Esophagus muscularis mucosa (tissue), 4 donors: ENCODE measurements at regions of chr21 and their contacts with region 1.

Region 1: GRCh38 chr21:36966066-36966820 is at the start of gene HLCS:
- DNase-seq: no peak
- H3K4me3 ChIP-seq: peak within 1 kb of the TSS; percentile 73 to 85 (median 79)
- H3K27ac ChIP-seq: peak within 1 kb of the TSS; percentile 79 to 91 (median 90)
- H3K4me1 ChIP-seq: peaks cover 0 to 20% (median 15%) of the 10 kb centered on the region in 4 donors
- H3K27me3 ChIP-seq: no peaks in the 10 kb centered on the region
- CTCF ChIP-seq: peak in 1 of 3 experiments; percentile 40
- EP300 ChIP-seq: no peak
- POLR2A ChIP-seq: no peak
- total RNA-seq, gene HLCS: 15.9 to 25.3 (median 22.0) TPM

Region 2: GRCh38 chr21:36989699-36990507 is 23.7 kb after region 1 on chr21:
- intact Hi-C with region 1: loop called (anchors 2 kb)
- DNase-seq: peak; percentile 95
- H3K4me3 ChIP-seq: peak overlapping the region; percentile 68 to 74 (median 69)
- H3K27ac ChIP-seq: peak overlapping the region; percentile 89 to 95 (median 93)
- H3K4me1 ChIP-seq: peaks cover 0 to 12% (median 6%) of the 10 kb centered on the region in 4 donors
- H3K27me3 ChIP-seq: peaks cover 0 to 22% (median 3%) of the 10 kb centered on the region in 4 donors
- CTCF ChIP-seq: peak in 2 of 3 experiments; percentile 79 to 97
- EP300 ChIP-seq: no peak
- POLR2A ChIP-seq: no peak

Region 3: DNA sequence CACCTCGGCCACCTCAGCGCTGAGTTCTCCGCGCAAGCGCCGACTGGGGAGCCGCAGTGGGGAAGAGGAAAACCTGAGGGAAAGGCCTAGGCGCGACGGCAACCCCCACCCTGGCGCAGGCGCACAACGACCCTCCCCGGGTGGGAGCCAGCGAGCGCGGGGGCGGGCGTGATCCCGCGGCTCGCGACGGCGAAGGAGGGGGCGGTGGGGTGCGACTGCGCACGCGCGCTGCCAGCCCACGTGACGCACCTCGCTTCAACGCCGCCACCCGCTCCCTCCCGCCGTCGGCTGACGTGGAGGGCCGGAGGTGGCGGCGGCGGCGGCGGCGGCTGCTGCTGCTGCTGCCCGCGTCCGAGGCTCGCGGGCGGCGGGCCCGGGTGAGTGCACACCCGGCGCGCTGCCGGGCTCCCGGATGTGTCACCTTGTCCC is 106.8 kb after region 1 on chr21 and contains the starts of genes PIGP and TTC3:
- intact Hi-C with region 1: loop called (anchors 10 kb)
- DNase-seq: peak; percentile 96
- H3K4me3 ChIP-seq: peak within 1 kb of the TSS; percentile 75 to 97 (median 76)
- H3K27ac ChIP-seq: peak within 1 kb of the TSS; percentile 92 to 100 (median 100)
- H3K4me1 ChIP-seq: peaks cover 16 to 40% (median 32%) of the 10 kb centered on the region in 4 donors
- H3K27me3 ChIP-seq: no peaks in the 10 kb centered on the region
- CTCF ChIP-seq: peak in 1 of 3 experiments; percentile 3
- EP300 ChIP-seq: no peak
- POLR2A ChIP-seq: peak; percentile 50
- total RNA-seq, gene PIGP: 20.3 to 30.7 (median 21.6) TPM
- total RNA-seq, gene TTC3: 86.0 to 162 (median 104) TPM